ENCODE measurements at regions of chr20 and their contacts with region 1.

Region 1: GRCh38 chr20:45293041-45294002 is 13.3 kb upstream of the RBPJL start:
- DNase-seq: peak; percentile 52
- ATAC-seq: peak; percentile 92
- H3K4me3 ChIP-seq: peak overlapping the region; percentile 57 to 66
- H3K27ac ChIP-seq: peak overlapping the region; percentile 52
- H3K4me1 ChIP-seq: no peaks in the 10 kb centered on the region
- H3K27me3 ChIP-seq: peaks cover 2% of the 10 kb centered on the region; the same call in 1 of the 2 replicates
- CTCF ChIP-seq: peak; percentile 99

Region 2: GRCh38 chr20:45044084-45044573 is 249.2 kb before region 1 on chr20:
- CTCF ChIA-PET with region 1: interaction called, 15 read pairs
- POLR2A ChIA-PET with region 1: no interaction called
- in situ Hi-C with region 1: no loop called
- intact Hi-C with region 1: loop called (anchors 5 kb)
- DNase-seq: peak; percentile 47
- ATAC-seq: peak; percentile 86
- H3K4me3 ChIP-seq: no peak overlapping the region
- H3K27ac ChIP-seq: peak overlapping the region; percentile 63
- H3K4me1 ChIP-seq: peaks cover 16% of the 10 kb centered on the region
- H3K27me3 ChIP-seq: no peaks in the 10 kb centered on the region
- CTCF ChIP-seq: peak; percentile 86

Region 3: DNA sequence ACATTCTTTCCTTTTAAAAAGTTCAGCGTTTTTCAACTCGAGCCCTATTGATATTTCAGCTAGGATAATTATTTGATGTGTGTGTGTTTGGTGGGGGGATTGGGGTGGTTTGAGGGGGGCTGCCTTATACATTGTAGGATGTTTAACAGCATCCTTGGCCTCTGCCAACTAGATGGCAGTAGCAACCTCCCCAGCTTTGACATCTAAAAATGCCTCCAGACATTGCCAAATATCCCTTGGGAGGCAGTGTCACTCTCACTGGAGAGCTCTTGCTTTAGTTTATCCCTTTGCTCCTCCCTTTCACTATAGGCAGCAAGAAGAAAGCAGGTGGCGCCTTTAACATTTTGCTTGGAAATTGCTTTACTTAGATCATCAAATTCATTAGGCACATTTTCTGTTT is 99.4 kb after region 1 on chr20:
- CTCF ChIA-PET with region 1: no interaction called
- POLR2A ChIA-PET with region 1: no interaction called
- in situ Hi-C with region 1: no loop called
- intact Hi-C with region 1: no loop called
- DNase-seq: no peak
- ATAC-seq: 0 out of 2 replicates have a peak, but pooled peaks have one; percentile 51
- H3K4me3 ChIP-seq: no peak overlapping the region
- H3K27ac ChIP-seq: no peak overlapping the region
- H3K4me1 ChIP-seq: no peaks in the 10 kb centered on the region
- H3K27me3 ChIP-seq: no peaks in the 10 kb centered on the region
- CTCF ChIP-seq: peak; percentile 48

Measured in Panc1 (cell line).